Activated T-helper 1 cell treated with anti-CD3 and anti-CD28 coated beads, Interleukin-12 subunit alpha, Interleukin-12 subunit beta, Interleukin-2, Interleukin-4 antibody, amounts not matched to agents 30 ng/mL and 10 ng/mL and 1 ng/mL, durations not matched to agents 14 hours and 24 hours and 36 hours (primary cell): ENCODE measurements at regions of chr15 and their contacts with region 1.

Region 1: GRCh38 chr15:78709263-78709882 is 68.4 kb upstream of the CHRNB4 start:
- DNase-seq: peak; percentile 48
- H3K4me3 Mint-ChIP-seq: no peak overlapping the region
- H3K27ac Mint-ChIP-seq: no peak overlapping the region
- H3K4me1 Mint-ChIP-seq: peaks cover 8% of the 10 kb centered on the region
- H3K27me3 Mint-ChIP-seq: peaks cover 14% of the 10 kb centered on the region

Region 2: DNA sequence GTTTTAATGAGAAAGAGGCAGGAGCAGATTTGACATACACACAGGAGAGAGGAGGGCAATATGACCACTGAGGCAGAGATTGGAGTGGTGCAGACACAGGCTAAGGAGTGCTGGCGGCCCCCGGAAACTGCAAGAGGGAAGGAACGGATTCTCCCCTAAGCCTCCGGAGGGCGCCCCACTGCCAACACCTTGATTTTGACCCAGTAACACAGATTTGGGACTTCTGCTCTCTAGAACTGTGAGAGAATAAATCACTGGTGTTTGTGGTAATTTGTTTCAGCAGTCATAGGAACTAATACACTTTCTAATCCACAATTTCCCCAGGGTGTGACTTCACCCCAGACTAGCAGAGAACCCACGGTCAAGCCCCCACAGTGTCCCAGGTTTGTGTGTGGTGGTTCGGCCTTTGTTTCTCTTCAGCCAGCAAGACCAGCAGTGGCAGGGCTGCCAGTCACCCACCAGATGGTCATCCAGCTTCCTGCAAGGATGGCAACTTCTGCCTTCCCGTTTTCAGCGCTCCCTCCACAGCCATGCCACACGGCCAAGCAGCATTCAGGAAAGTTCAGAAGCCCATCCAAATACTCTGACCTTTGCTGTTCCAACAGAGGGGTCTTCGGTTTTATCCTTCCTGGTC is 1614.9 kb before region 1 on chr15:
- intact Hi-C with region 1: no loop called
- DNase-seq: no peak
- H3K4me3 Mint-ChIP-seq: no peak overlapping the region
- H3K27ac Mint-ChIP-seq: no peak overlapping the region
- H3K4me1 Mint-ChIP-seq: no peaks in the 10 kb centered on the region
- H3K27me3 Mint-ChIP-seq: peaks cover 4% of the 10 kb centered on the region

Region 3: DNA sequence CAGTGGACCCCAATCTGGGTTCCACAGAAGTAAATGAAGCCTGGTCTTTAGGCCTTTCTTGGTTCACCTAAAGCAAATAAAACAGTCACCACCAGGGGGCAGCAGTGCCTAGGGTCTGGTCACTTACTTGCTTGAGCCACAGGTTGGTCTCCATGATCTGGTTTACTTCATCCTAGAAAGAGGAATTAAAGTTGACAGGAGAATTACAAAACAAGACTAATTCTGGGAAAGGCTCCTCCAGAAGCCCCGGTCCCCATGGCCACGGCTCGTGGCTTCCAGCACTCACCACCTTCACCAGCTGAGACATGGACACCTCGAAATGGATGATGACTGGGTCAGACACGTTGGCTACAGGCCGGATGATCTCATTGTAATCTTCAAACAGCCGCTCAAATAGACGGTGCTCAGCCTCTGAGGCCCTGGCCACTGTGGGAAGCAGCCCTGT is 90.9 kb before region 1 on chr15:
- intact Hi-C with region 1: loop called (anchors 1 kb)
- DNase-seq: peak; percentile 63
- H3K4me3 Mint-ChIP-seq: no peak overlapping the region
- H3K27ac Mint-ChIP-seq: peak overlapping the region; percentile 61
- H3K4me1 Mint-ChIP-seq: no peaks in the 10 kb centered on the region
- H3K27me3 Mint-ChIP-seq: peaks cover 50% of the 10 kb centered on the region

Region 4: GRCh38 chr15:78638658-78639314 is 70.6 kb before region 1 on chr15:
- intact Hi-C with region 1: loop called (anchors 1 kb)
- DNase-seq: no peak
- H3K4me3 Mint-ChIP-seq: no peak overlapping the region
- H3K27ac Mint-ChIP-seq: no peak overlapping the region
- H3K4me1 Mint-ChIP-seq: no peaks in the 10 kb centered on the region
- H3K27me3 Mint-ChIP-seq: peaks cover 14% of the 10 kb centered on the region

Region 5: GRCh38 chr15:78654272-78654671 is 55.1 kb before region 1 on chr15:
- intact Hi-C with region 1: no loop called
- DNase-seq: no peak
- H3K4me3 Mint-ChIP-seq: no peak overlapping the region
- H3K27ac Mint-ChIP-seq: no peak overlapping the region
- H3K4me1 Mint-ChIP-seq: no peaks in the 10 kb centered on the region
- H3K27me3 Mint-ChIP-seq: peaks cover 4% of the 10 kb centered on the region

Region 6: DNA sequence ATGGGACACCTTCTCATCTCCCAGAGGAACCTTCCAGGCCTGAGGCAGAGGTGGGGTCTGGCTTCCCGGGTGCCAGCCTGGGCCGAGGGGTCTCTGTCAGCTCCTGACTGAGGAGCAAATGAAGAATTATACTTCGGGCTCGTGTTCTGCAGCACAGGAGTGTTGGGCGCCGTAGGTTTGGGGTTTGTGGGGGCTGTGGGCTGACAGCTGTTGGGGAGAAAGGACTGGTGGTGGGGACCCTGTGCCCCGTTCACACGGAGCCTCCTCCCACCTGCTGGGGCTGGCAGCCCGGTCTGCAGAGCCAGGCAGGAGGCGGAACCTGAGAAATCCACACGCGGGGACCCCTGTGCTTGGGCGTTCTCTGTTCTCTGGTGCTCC is 42.2 kb after region 1 on chr15:
- intact Hi-C with region 1: loop called (anchors 1 kb)
- DNase-seq: no peak
- H3K4me3 Mint-ChIP-seq: no peak overlapping the region
- H3K27ac Mint-ChIP-seq: no peak overlapping the region
- H3K4me1 Mint-ChIP-seq: no peaks in the 10 kb centered on the region
- H3K27me3 Mint-ChIP-seq: peaks cover 3% of the 10 kb centered on the region